Heart right ventricle (tissue), 16 donors: ENCODE measurements at regions of chr7 and their contacts with region 1.

Region 1: DNA sequence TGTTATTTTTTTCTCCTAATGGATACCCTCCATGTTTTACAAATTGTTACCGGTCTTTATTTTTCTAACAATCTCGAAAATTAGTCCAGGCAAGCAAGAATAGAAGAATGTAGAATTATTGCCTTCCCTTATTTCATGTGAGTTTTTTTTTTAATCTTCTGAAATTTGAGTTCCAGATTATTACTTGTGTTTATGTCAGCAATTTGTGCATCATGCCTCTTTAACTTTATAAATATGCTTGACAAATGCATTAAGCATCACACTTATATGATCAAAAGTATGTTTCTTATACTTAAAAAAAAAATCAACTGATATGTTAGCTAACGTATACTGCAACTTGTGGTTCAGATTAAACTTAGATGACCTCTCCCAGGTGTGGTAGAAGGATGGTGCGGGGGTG is 242.7 kb upstream of the VSTM2A start:
- DNase-seq: no peak
- ATAC-seq: no peak
- H3K4me3 ChIP-seq: no peak overlapping the region
- H3K27ac ChIP-seq: no peak overlapping the region
- H3K4me1 ChIP-seq: no peaks in the 10 kb centered on the region
- H3K27me3 ChIP-seq: no peaks in the 10 kb centered on the region
- CTCF ChIP-seq: no peak

Region 2: DNA sequence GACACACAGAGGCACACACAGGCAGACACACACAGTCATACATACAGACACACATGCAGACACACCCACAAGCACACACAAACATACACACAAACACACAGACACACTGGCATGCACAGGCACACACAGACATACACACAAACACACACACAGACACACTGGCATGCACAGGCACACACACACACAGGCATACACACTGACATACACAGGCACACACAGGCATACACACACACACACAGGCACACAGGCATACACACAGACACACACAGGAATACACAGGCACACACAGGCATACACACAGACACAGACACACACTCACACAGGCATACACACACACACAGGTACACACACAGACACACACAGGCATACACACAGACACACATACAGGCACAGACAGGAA is 97.9 kb before region 1 on chr7:
- intact Hi-C with region 1: loop called in 1 of 10 experiments (anchors 10 kb)
- DNase-seq: no peak
- ATAC-seq: no peak
- H3K4me3 ChIP-seq: no peak overlapping the region
- H3K27ac ChIP-seq: no peak overlapping the region
- H3K4me1 ChIP-seq: no peaks in the 10 kb centered on the region
- H3K27me3 ChIP-seq: no peaks in the 10 kb centered on the region
- CTCF ChIP-seq: no peak